B cell (primary cell): ENCODE measurements at regions of chr2 and their contacts with region 1.

Region 1: GRCh38 chr2:20326163-20326780 is 24.4 kb downstream of the PUM2 start:
- DNase-seq: peak; percentile 60
- ATAC-seq: peak; percentile 56
- H3K4me3 ChIP-seq: no peak overlapping the region
- H3K4me3 Mint-ChIP-seq: no peak overlapping the region
- H3K27ac ChIP-seq: peak overlapping the region in 1 of 2 donors; percentile 85
- H3K27ac Mint-ChIP-seq: no peak overlapping the region
- H3K4me1 ChIP-seq: peaks cover 17 to 28% of the 10 kb centered on the region in 2 donors
- H3K4me1 Mint-ChIP-seq: peaks cover 62% of the 10 kb centered on the region
- H3K27me3 ChIP-seq: no peaks in the 10 kb centered on the region
- H3K27me3 Mint-ChIP-seq: no peaks in the 10 kb centered on the region
- CTCF ChIP-seq: peak; percentile 76

Region 2: DNA sequence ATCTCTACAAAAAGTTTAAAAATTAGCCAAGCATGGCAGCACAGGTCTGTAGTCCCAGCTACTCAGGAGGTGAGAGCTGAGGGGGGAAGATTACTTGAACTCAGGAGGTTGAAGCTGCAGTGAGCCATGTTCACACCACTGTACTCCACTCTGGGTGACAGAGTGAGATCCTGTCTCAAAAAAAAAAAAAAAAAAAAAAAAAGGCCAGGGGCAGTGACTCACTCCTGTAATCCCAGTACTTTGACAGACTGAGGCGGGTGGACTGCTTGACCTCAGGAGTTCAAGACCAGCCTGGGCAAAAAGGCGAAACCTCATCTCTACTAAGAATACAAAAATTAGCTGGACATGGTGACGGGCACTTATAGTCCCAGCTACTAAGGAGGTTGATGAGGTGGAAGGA is 12.6 kb before region 1 on chr2:
- CTCF ChIA-PET with region 1: interaction called, 15 read pairs
- POLR2A ChIA-PET with region 1: interaction called, 11 read pairs
- intact Hi-C with region 1: no loop called
- DNase-seq: no peak
- ATAC-seq: no peak
- H3K4me3 ChIP-seq: no peak overlapping the region
- H3K4me3 Mint-ChIP-seq: no peak overlapping the region
- H3K27ac ChIP-seq: no peak overlapping the region
- H3K27ac Mint-ChIP-seq: no peak overlapping the region
- H3K4me1 ChIP-seq: peaks cover 0 to 8% of the 10 kb centered on the region in 2 donors
- H3K4me1 Mint-ChIP-seq: peaks cover 10% of the 10 kb centered on the region
- H3K27me3 ChIP-seq: no peaks in the 10 kb centered on the region
- H3K27me3 Mint-ChIP-seq: no peaks in the 10 kb centered on the region
- CTCF ChIP-seq: no peak

Region 3: DNA sequence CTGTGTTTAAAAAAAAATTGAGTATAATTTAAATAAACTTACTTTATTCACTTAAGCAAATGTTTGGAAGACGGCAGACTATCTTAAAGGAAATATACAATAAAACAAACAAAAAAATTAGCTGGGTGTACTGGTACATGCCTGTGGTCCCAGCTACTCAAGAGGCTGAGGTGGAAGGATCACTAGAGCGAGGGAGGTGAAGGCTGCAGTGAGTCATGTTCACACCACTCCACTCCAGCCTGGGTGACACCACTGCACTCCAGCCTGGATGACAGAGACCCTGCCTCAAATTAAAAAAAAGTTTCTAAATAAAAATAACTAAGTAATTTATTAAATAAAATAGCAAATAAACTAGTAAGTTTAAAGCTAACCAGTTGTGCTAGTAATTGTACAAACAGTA is 16.9 kb after region 1 on chr2:
- CTCF ChIA-PET with region 1: interaction called, 34 read pairs
- POLR2A ChIA-PET with region 1: interaction called, 7 read pairs
- intact Hi-C with region 1: no loop called
- DNase-seq: no peak
- ATAC-seq: no peak
- H3K4me3 ChIP-seq: no peak overlapping the region
- H3K4me3 Mint-ChIP-seq: no peak overlapping the region
- H3K27ac ChIP-seq: no peak overlapping the region
- H3K27ac Mint-ChIP-seq: no peak overlapping the region
- H3K4me1 ChIP-seq: peaks cover 41 to 46% of the 10 kb centered on the region in 2 donors
- H3K4me1 Mint-ChIP-seq: peaks cover 80% of the 10 kb centered on the region
- H3K27me3 ChIP-seq: no peaks in the 10 kb centered on the region
- H3K27me3 Mint-ChIP-seq: no peaks in the 10 kb centered on the region
- CTCF ChIP-seq: no peak

Region 4: DNA sequence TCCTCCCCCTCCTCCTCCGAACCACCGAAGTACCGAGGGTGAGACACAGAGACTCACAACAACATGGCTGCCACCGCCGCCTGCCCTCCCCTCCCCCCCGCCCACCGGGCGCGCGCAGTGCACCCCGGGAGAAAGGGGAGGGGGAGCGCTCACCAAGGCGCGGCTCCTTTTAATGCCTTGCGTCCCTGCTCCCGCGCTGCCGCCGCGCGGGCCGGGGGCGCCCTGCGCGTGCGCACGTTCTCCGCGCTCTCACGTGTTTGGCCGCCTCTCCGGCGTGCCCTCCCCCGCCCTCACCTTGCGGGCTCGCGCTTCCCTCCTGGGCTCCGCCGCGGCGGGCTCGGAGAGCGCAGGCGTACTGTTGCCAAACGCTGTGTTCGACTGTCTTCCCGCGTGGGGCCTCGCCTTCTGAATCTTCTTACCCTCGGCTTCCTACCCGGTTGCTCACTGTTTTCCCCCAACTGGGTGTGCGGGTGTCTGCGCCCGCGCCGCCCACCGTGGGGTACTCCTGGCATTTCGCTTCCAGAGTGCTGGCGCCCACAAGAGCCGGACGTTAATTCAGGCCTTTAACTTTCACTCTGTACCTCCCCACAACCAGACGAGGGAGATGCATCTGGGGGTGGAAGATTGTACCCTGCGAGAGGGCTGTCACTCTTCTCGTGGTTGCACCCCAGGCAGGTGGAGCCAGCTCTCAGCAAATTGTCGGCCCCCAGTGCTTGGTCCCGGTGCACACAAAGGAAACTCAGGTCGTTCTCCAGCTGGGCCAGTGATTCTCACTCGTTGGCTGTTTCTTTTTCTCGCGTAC is 24.7 kb after region 1 on chr2 and contains the start of gene PUM2:
- CTCF ChIA-PET with region 1: interaction called, 21 read pairs
- POLR2A ChIA-PET with region 1: interaction called, 3 read pairs
- intact Hi-C with region 1: loop called (anchors 1 kb)
- DNase-seq: peak; percentile 99
- ATAC-seq: peak; percentile 85
- H3K4me3 ChIP-seq: peak within 1 kb of the TSS; percentile 76 to 95 (median 86)
- H3K4me3 Mint-ChIP-seq: no peak within 1 kb of the TSS
- H3K27ac ChIP-seq: peak within 1 kb of the TSS; percentile 89 to 94
- H3K27ac Mint-ChIP-seq: no peak within 1 kb of the TSS
- H3K4me1 ChIP-seq: peaks cover 32 to 39% of the 10 kb centered on the region in 2 donors
- H3K4me1 Mint-ChIP-seq: peaks cover 34% of the 10 kb centered on the region
- H3K27me3 ChIP-seq: no peaks in the 10 kb centered on the region
- H3K27me3 Mint-ChIP-seq: no peaks in the 10 kb centered on the region
- CTCF ChIP-seq: peak; percentile 17
- total RNA-seq, gene PUM2: 151 and 163 TPM in 2 replicates